ENCODE measurements at regions of chr19 and their contacts with region 1.

Region 1: DNA sequence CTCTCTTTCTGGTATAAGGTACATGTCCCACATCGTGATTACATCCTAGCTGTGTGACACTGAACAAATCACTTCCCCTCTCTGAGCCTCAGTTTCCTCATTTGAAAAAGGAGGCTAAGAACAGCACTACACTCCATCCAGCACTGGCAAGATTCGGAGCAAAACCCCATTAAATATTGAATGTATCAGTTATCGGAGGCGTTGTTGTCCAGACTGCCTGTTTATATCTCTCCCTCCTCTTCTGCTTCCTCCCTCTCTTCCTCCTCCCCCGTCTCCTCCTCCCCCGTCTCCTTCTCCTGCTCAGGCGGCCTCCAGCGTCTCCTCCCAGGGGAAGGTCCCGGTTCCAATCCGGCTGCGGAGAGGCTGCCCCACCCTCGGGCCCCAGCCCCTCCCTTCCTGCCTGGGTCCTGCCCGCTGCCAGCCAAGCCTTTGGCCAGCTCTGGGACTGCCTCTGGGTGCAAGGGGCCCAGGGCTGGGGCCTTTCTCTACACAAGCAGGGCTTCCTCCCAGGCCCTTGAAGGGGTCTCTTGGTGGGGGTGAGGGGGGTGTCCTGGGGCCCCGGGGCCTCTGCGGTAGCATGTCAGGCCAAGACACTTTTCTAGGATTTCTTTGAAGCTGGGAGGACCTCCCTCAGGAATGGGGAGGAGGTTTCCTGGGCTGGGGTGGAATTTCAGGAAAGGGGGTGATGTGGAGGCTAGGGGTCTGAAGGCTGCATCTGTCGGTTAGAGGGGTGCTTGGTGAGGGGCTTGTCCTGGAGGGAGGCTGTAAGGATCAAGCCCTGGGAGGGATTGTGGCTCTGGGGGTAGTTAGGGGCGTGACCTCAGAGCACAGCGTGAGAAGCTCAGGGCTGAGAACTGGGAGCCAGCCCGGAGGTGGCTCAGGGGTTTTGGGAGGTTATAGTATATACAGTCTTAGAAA is 1.9 kb downstream of the RRAS start:
- DNase-seq: peak; percentile 94
- H3K4me3 ChIP-seq: peak overlapping the region; percentile 10
- H3K27ac ChIP-seq: peak overlapping the region; percentile 87
- H3K4me1 ChIP-seq: peaks cover 3% of the 10 kb centered on the region
- H3K27me3 ChIP-seq: no peaks in the 10 kb centered on the region
- CTCF ChIP-seq: no peak

Region 2: GRCh38 chr19:49590071-49590970 is 47.8 kb before region 1 on chr19:
- intact Hi-C with region 1: loop called (anchors 5 kb)
- DNase-seq: peak; percentile 99
- H3K4me3 ChIP-seq: peak overlapping the region; percentile 74
- H3K27ac ChIP-seq: peak overlapping the region; percentile 91
- H3K4me1 ChIP-seq: no peaks in the 10 kb centered on the region
- H3K27me3 ChIP-seq: no peaks in the 10 kb centered on the region
- CTCF ChIP-seq: no peak

Region 3: GRCh38 chr19:49712397-49712859 is 74.3 kb after region 1 on chr19:
- intact Hi-C with region 1: no loop called
- DNase-seq: peak; percentile 65
- H3K4me3 ChIP-seq: no peak overlapping the region
- H3K27ac ChIP-seq: no peak overlapping the region
- H3K4me1 ChIP-seq: no peaks in the 10 kb centered on the region
- H3K27me3 ChIP-seq: no peaks in the 10 kb centered on the region
- CTCF ChIP-seq: no peak

Region 4: DNA sequence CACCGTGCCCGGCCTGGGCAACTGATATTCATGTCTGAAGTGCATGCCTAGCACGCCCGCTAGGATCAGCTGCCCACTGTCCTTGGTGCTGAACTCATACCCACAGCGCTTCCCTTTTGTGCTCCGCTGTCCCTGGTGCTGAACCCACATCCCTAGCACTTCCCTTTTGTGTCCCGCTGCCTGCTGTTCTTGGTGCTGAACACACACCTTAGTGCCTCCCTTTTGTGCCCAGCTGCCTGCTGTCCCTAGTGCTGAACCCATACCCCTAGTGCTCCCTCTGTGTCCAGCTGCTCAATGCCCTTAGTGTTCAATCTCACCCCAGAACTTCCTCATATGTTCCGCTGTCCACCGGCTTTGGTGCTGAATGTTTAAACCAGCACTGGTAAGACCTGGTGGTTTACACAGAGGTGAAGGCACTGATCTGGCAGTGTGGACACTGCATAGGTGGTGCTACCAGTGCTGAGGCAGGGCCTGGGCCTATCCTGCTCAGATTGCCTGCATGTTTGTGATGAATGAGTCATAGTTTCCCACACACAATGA is 349.1 kb after region 1 on chr19:
- intact Hi-C with region 1: no loop called
- DNase-seq: peak; percentile 92
- H3K4me3 ChIP-seq: no peak overlapping the region
- H3K27ac ChIP-seq: no peak overlapping the region
- H3K4me1 ChIP-seq: no peaks in the 10 kb centered on the region
- H3K27me3 ChIP-seq: no peaks in the 10 kb centered on the region
- CTCF ChIP-seq: no peak